ENCODE measurements at regions of chr15 and their contacts with region 1.

Region 1: DNA sequence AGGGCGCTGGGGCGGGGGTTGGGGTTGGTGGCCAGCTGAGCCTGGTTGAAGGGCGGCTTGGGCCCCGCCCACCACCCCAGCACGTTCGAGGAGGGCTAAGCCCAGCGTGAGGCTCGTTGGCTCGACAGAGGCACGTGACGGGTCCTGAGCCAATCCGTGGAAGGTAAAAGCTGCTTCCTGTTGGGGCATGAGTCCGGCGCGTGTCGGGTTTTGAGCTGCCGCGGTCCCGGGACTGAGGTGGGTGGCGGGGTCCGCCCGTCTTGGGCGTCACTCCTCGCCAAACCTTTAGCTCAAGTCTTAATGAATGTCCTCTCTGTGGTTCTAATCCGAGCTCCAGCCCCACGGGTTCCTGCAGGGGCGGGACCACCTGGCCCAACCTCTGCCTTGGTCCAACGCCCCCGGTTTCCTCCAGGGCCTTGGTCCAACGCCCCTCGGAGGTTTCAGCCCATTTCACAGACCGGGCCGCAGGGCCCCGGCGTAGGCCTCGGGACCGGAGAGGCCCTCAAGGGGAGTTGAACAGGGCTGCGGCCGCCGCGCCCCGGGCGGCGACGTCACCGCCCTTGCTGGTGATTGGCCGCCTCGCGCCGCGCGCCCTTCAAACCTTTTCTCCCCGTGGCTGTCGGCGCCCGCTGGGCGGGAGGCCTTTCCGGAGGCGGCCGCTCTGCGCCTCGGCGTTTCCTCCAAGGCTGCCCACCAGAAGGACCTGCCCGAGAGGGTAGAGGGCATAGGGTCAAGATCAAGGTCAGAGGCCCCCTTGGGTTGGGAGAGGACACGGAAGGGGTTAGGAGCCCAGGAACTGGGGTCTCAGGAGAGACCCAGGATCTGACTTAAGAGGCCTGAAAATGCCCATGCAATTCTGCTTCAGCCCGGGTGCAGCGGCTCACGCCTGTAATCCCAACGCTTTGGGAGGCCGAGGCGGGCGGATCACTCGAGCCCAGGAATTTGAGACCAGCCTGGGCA is at the start of gene RCCD1:
- DNase-seq: peak; percentile 83
- ATAC-seq: peak; percentile 94
- H3K4me3 Mint-ChIP-seq: peak within 1 kb of the TSS; percentile 88
- H3K27ac Mint-ChIP-seq: peak within 1 kb of the TSS; percentile 92
- H3K4me1 Mint-ChIP-seq: peaks cover 21% of the 10 kb centered on the region
- H3K27me3 Mint-ChIP-seq: no peaks in the 10 kb centered on the region
- CTCF ChIP-seq: no peak
- total RNA-seq, gene RCCD1: 15.7 and 19.3 TPM in 2 replicates

Region 2: DNA sequence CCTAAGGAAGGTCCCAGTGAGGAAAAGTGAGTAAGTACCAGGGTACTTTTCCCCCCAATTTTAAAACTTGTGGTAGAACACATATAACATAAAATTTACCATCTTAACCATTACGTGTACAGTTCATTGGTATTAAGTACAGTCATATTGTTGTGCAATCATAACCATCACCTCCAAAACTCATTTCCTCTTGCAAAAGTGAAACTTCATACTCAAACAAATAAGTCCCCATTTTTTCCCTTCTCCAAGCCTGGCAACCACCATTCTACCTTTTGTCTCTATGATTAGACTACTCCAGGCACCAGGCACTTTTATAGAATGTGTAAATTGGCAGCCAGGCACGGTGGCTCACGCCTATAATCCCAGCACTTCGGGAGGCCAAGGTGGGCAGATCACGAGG is 27.1 kb after region 1 on chr15:
- CTCF ChIA-PET with region 1: interaction called, 26 read pairs
- POLR2A ChIA-PET with region 1: interaction called, 17 read pairs
- intact Hi-C with region 1: loop called (anchors 2 kb)
- DNase-seq: no peak
- ATAC-seq: peak; percentile 43
- H3K4me3 Mint-ChIP-seq: peak overlapping the region; percentile 21
- H3K27ac Mint-ChIP-seq: peak overlapping the region; percentile 77
- H3K4me1 Mint-ChIP-seq: peaks cover 32% of the 10 kb centered on the region
- H3K27me3 Mint-ChIP-seq: no peaks in the 10 kb centered on the region
- CTCF ChIP-seq: no peak

Region 3: GRCh38 chr15:91022075-91022835 is 67.3 kb after region 1 on chr15 and contains the start of gene VPS33B:
- CTCF ChIA-PET with region 1: interaction called, 7 read pairs
- POLR2A ChIA-PET with region 1: interaction called, 6 read pairs
- intact Hi-C with region 1: loop called (anchors 1 kb)
- DNase-seq: peak; percentile 63
- ATAC-seq: peak; percentile 83
- H3K4me3 Mint-ChIP-seq: peak within 1 kb of the TSS; percentile 99
- H3K27ac Mint-ChIP-seq: peak within 1 kb of the TSS; percentile 89
- H3K4me1 Mint-ChIP-seq: peaks cover 35% of the 10 kb centered on the region
- H3K27me3 Mint-ChIP-seq: no peaks in the 10 kb centered on the region
- CTCF ChIP-seq: no peak
- total RNA-seq, gene VPS33B: 27.3 and 33.4 TPM in 2 replicates

Region 4: GRCh38 chr15:91049378-91050127 is 94.6 kb after region 1 on chr15:
- CTCF ChIA-PET with region 1: interaction called, 33 read pairs
- POLR2A ChIA-PET with region 1: no interaction called
- intact Hi-C with region 1: loop called (anchors 1 kb)
- DNase-seq: no peak
- ATAC-seq: peak; percentile 83
- H3K4me3 Mint-ChIP-seq: no peak overlapping the region
- H3K27ac Mint-ChIP-seq: no peak overlapping the region
- H3K4me1 Mint-ChIP-seq: peaks cover 17% of the 10 kb centered on the region
- H3K27me3 Mint-ChIP-seq: peaks cover 20% of the 10 kb centered on the region
- CTCF ChIP-seq: no peak

Region 5: GRCh38 chr15:91271565-91272153 is 316.7 kb after region 1 on chr15:
- CTCF ChIA-PET with region 1: interaction called, 6 read pairs
- POLR2A ChIA-PET with region 1: interaction called, 6 read pairs
- intact Hi-C with region 1: loop called (anchors 5 kb)
- DNase-seq: no peak
- ATAC-seq: peak; percentile 45
- H3K4me3 Mint-ChIP-seq: no peak overlapping the region
- H3K27ac Mint-ChIP-seq: no peak overlapping the region
- H3K4me1 Mint-ChIP-seq: peaks cover 2% of the 10 kb centered on the region
- H3K27me3 Mint-ChIP-seq: peaks cover 18% of the 10 kb centered on the region
- CTCF ChIP-seq: peak; percentile 78